Activated T-helper 2 cell treated with anti-CD3 and anti-CD28 coated beads, Interferon-gamma antibody, Interleukin-2, Interleukin-4, amounts not matched to agents 10 μg/mL and 5 μg/mL and 100 μg/mL, durations not matched to agents 14 hours and 24 hours and 36 hours (primary cell): ENCODE measurements at regions of chr22 and their contacts with region 1.

Region 1: GRCh38 chr22:39900306-39901227 is at the start of gene GRAP2:
- DNase-seq: peak; percentile 78
- H3K4me3 Mint-ChIP-seq: peak within 1 kb of the TSS; percentile 98
- H3K27ac Mint-ChIP-seq: peak within 1 kb of the TSS; percentile 99
- H3K4me1 Mint-ChIP-seq: peaks cover 31% of the 10 kb centered on the region
- H3K27me3 Mint-ChIP-seq: no peaks in the 10 kb centered on the region
- total RNA-seq, gene GRAP2: 44.1 and 46.5 TPM in 2 replicates

Region 2: GRCh38 chr22:39808081-39808480 is 92.5 kb before region 1 on chr22:
- intact Hi-C with region 1: no loop called
- DNase-seq: no peak
- H3K4me3 Mint-ChIP-seq: no peak overlapping the region
- H3K27ac Mint-ChIP-seq: no peak overlapping the region
- H3K4me1 Mint-ChIP-seq: peaks cover 27% of the 10 kb centered on the region
- H3K27me3 Mint-ChIP-seq: peaks cover 21% of the 10 kb centered on the region

Region 3: DNA sequence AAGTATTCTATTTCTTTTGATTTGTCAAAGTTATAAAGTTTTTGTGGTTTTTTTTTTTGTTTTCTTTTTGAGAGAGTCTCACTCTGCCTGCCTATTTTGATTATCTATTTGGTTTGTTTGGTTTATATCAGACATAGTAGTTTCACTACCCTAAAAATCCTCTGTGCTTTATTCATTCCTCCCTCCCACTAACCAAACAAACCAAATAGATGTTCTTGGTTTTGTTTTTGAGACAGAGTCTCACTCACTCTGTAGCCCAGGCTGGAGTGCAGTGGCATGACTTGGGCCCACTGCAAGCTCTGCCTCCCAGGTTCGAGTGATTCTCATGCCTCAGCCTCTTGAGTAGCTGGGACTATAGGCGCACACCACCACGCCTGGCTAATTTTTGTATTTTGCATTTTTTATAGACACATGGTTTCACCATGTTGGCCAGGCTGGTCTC is 74.9 kb before region 1 on chr22:
- intact Hi-C with region 1: loop called (anchors 1 kb)
- DNase-seq: no peak
- H3K4me3 Mint-ChIP-seq: no peak overlapping the region
- H3K27ac Mint-ChIP-seq: no peak overlapping the region
- H3K4me1 Mint-ChIP-seq: peaks cover 20% of the 10 kb centered on the region
- H3K27me3 Mint-ChIP-seq: peaks cover 43% of the 10 kb centered on the region

Region 4: GRCh38 chr22:39938509-39939111 is 38.0 kb after region 1 on chr22:
- intact Hi-C with region 1: loop called (anchors 5 kb)
- DNase-seq: no peak
- H3K4me3 Mint-ChIP-seq: peak overlapping the region; percentile 18
- H3K27ac Mint-ChIP-seq: peak overlapping the region; percentile 60
- H3K4me1 Mint-ChIP-seq: peaks cover 93% of the 10 kb centered on the region
- H3K27me3 Mint-ChIP-seq: no peaks in the 10 kb centered on the region